ENCODE measurements at regions of chr3 and their contacts with region 1.

Region 1: GRCh38 chr3:138329127-138329983 is at the start of gene NME9:
- DNase-seq: peak; percentile 82 to 96 (median 92)
- ATAC-seq: peak; percentile 89
- H3K4me3 ChIP-seq: peak within 1 kb of the TSS; percentile 65 to 78
- H3K4me3 Mint-ChIP-seq: peak within 1 kb of the TSS; percentile 98
- H3K27ac ChIP-seq: peak within 1 kb of the TSS; percentile 62 to 74
- H3K27ac Mint-ChIP-seq: peak within 1 kb of the TSS; percentile 94
- H3K4me1 ChIP-seq: peaks cover 6% of the 10 kb centered on the region
- H3K4me1 Mint-ChIP-seq: peaks cover 27% of the 10 kb centered on the region
- H3K27me3 ChIP-seq: no peaks in the 10 kb centered on the region
- H3K27me3 Mint-ChIP-seq: no peaks in the 10 kb centered on the region
- CTCF ChIP-seq: peak; percentile 67
- total RNA-seq, gene NME9: 1.2 TPM in 1 of 2 experiments, not detected in the other

Region 2: DNA sequence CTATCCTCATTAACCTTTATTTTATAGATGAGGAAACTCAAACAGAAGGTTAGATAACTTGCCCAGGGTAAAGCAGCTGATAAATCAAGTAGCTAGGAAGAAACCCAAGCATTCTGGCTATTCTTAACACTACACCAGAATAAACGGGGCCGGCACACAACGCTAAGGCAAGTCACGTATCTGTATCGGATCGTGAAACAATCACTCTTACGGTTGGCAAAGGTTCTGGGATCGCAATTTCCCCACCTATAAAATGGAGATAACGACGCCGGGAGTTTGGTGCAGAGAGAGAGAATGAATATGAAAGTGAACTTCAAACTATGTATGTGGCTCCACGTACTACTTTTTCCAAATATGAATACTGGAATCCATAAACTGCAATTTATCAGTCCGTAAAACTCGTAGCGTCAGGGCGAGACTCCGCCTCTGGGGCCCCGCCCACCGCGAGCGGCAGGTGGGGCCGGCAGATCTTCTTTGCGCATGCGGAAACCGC is 142.5 kb before region 1 on chr3:
- CTCF ChIA-PET with region 1: interaction called, 4 read pairs
- POLR2A ChIA-PET with region 1: interaction called, 3 read pairs
- intact Hi-C with region 1: loop called (anchors 1 to 2 kb)
- DNase-seq: peak; percentile 79 to 95 (median 89)
- ATAC-seq: peak; percentile 95
- H3K4me3 ChIP-seq: peak overlapping the region; percentile 94
- H3K4me3 Mint-ChIP-seq: peak overlapping the region; percentile 97
- H3K27ac ChIP-seq: peak overlapping the region; percentile 90 to 92
- H3K27ac Mint-ChIP-seq: peak overlapping the region; percentile 98
- H3K4me1 ChIP-seq: peaks cover 29% of the 10 kb centered on the region
- H3K4me1 Mint-ChIP-seq: peaks cover 40% of the 10 kb centered on the region
- H3K27me3 ChIP-seq: peaks cover 0 to 3% of the 10 kb centered on the region in 2 experiments
- H3K27me3 Mint-ChIP-seq: peaks cover 5% of the 10 kb centered on the region
- CTCF ChIP-seq: no peak

Region 3: GRCh38 chr3:138834359-138835212 is 505.2 kb after region 1 on chr3 and contains the start of gene PIK3CB:
- CTCF ChIA-PET with region 1: no interaction called
- POLR2A ChIA-PET with region 1: no interaction called
- intact Hi-C with region 1: loop called (anchors 5 to 10 kb)
- DNase-seq: peak; percentile 71 to 93 (median 87)
- ATAC-seq: peak; percentile 86
- H3K4me3 ChIP-seq: peak within 1 kb of the TSS; percentile 73 to 86
- H3K4me3 Mint-ChIP-seq: peak within 1 kb of the TSS; percentile 89
- H3K27ac ChIP-seq: peak within 1 kb of the TSS; percentile 68 to 87
- H3K27ac Mint-ChIP-seq: peak within 1 kb of the TSS; percentile 96
- H3K4me1 ChIP-seq: peaks cover 12% of the 10 kb centered on the region
- H3K4me1 Mint-ChIP-seq: peaks cover 28% of the 10 kb centered on the region
- H3K27me3 ChIP-seq: no peaks in the 10 kb centered on the region
- H3K27me3 Mint-ChIP-seq: no peaks in the 10 kb centered on the region
- CTCF ChIP-seq: no peak
- total RNA-seq, gene PIK3CB: 14.7 to 15.0 TPM

Region 4: GRCh38 chr3:139343895-139344856 is 1014.8 kb after region 1 on chr3 and contains the start of gene MRPS22:
- CTCF ChIA-PET with region 1: no interaction called
- POLR2A ChIA-PET with region 1: no interaction called
- intact Hi-C with region 1: loop called in 1 of 2 experiments (anchors 1 kb)
- DNase-seq: peak; percentile 58 to 92 (median 84)
- ATAC-seq: peak; percentile 97
- H3K4me3 ChIP-seq: peak within 1 kb of the TSS; percentile 84 to 99
- H3K4me3 Mint-ChIP-seq: peak within 1 kb of the TSS; percentile 72
- H3K27ac ChIP-seq: peak within 1 kb of the TSS; percentile 70 to 92
- H3K27ac Mint-ChIP-seq: peak within 1 kb of the TSS; percentile 86
- H3K4me1 ChIP-seq: peaks cover 15% of the 10 kb centered on the region
- H3K4me1 Mint-ChIP-seq: peaks cover 11% of the 10 kb centered on the region
- H3K27me3 ChIP-seq: no peaks in the 10 kb centered on the region
- H3K27me3 Mint-ChIP-seq: peaks cover 5% of the 10 kb centered on the region
- CTCF ChIP-seq: no peak
- total RNA-seq, gene MRPS22: 55.4 to 57.6 TPM

Region 5: DNA sequence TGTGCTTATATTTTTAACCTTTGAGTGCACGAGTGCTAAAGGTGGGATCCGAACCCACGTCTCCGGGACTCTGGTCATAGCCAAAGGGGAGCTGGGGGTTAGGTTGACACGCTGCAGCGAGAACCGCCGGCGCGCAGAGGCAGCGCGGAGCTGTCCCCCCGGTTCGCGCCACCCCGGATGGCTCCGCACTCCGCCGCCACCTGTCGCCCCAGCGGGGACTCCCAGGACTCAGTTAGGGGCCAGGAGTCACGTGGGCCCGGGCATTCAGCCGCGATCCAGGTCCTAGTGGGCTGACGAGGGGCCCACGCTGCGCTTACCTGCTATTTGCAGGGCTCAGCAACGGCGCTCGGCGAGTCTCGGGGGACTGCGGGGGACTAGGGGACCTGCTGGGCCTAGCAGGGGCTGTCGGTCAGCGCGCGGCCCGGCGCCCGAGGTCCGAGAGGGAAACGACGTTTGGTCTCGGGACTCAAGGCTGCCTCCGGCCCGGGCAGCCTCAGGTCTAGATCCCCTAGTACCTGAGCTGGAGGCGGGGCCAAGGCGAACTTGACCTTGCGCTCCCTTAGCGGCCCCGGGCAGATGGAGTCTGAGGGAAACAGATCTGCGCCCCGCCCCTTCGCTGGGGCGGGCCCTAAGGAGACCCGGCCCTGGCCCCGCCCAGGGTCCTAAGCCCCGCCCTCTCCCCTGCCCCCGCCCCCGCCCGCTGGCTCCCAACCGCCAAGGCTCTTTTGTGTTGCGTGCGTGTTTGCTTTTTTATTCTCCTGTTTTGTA is 1348.2 kb after region 1 on chr3 and contains the start of gene NMNAT3:
- CTCF ChIA-PET with region 1: no interaction called
- POLR2A ChIA-PET with region 1: no interaction called
- intact Hi-C with region 1: loop called in 1 of 2 experiments (anchors 5 kb)
- DNase-seq: peak; percentile 62 to 87 (median 80)
- ATAC-seq: peak; percentile 99
- H3K4me3 ChIP-seq: peak within 1 kb of the TSS; percentile 89 to 100
- H3K4me3 Mint-ChIP-seq: peak within 1 kb of the TSS; percentile 83
- H3K27ac ChIP-seq: peak within 1 kb of the TSS; percentile 70 to 71
- H3K27ac Mint-ChIP-seq: peak within 1 kb of the TSS; percentile 53
- H3K4me1 ChIP-seq: peaks cover 6% of the 10 kb centered on the region
- H3K4me1 Mint-ChIP-seq: peaks cover 10% of the 10 kb centered on the region
- H3K27me3 ChIP-seq: no peaks in the 10 kb centered on the region
- H3K27me3 Mint-ChIP-seq: no peaks in the 10 kb centered on the region
- CTCF ChIP-seq: no peak
- total RNA-seq, gene NMNAT3: 0.81 to 1.2 TPM

Measured in CD8-positive, alpha-beta T cell (primary cell).